Transverse colon (tissue), 4 donors: ENCODE measurements at regions of chr16 and their contacts with region 1.

Region 1: DNA sequence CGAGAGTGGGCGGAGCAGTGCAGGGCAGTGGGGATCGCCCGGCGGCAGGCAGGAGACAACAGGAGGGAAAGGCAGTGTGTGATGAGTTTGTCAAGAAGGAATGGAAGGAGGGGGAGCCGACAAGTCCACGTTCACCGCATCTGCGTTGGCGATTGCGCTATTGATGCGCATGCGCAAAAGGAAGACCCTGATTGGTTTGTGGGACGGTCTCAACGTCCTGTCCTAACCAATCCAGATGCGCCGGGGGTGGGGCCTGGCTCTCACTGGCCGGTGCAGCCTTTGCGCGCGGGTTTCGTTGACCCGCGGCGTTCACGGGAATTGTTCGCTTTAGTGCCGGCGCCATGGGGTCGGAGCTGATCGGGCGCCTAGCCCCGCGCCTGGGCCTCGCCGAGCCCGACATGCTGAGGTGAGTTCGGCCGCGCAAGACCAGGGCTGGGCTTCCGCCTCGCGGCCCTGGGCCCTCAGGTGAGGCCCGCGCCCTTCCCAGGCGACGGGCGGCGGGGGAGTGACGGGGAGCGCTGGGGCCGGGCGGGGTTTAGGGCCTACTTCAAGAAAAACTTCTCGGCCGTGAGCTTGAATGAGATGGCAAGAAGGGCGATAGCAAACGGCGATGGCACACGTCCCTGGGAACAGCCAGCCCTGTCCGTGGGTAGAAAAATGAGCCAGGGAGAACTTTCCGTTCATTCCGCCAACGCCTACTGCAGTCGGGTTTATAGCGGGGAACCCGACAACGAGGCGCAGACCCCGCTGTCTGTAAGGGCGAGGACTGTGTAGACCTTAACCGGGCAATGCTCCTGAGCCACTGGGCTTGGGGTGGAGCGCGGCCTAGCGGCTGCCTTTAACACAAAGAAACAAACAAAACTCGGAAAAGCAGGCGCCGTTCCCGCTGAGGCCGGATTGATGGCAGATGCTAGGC is at the start of gene ORC6:
- DNase-seq: peak; percentile 98
- H3K4me3 ChIP-seq: peak within 1 kb of the TSS; percentile 61 to 93 (median 86)
- H3K27ac ChIP-seq: peak within 1 kb of the TSS; percentile 88 to 96 (median 92)
- H3K4me1 ChIP-seq: peaks cover 10 to 53% (median 32%) of the 10 kb centered on the region in 4 donors
- H3K27me3 ChIP-seq: no peaks in the 10 kb centered on the region
- CTCF ChIP-seq: peak in 3 of 5 experiments; percentile 11 to 29 (median 23)
- EP300 ChIP-seq: no peak
- POLR2A ChIP-seq: no peak
- total RNA-seq, gene ORC6: 0.60 to 4.9 (median 2.7) TPM in 3 of 4 donors, not detected in the other

Region 2: DNA sequence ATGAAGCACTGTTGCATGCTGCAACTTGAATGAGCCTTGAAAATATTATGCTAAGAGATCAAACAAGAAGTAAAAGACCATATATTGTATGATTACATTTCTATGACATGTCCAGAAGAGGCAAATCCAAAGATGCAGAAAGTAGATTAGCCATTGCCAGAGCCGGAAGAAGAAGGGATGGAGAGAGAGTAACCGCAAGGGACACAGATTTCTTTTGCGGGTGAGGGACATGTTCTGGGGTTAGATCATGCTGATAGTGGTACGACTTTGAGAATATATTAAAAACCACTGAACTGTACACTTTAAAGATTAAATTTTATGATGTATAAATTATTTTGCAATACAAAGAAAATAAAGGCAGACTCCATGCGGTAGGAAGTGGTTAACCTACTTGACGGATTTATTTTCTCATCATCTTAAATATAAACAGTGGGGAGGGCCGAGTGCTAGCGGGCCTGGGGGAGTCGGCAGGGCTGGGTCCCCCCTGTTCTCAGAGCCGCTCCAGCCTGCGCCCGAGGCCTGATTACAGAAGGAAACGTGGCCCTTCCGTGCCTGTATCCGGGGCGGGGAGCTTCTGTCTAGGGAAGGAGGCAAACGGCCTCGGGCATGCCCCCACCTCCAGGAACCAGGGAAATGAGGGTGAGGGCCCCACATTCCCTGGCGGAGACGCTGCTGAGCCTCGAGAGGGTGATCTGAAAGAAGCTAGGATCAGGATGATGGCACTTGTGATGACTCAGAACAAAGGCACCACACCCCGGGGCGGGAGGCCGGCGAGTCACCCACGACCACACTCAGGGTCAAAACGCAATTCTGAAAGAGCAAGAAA is 116.4 kb before region 1 on chr16:
- in situ Hi-C with region 1: no loop called
- intact Hi-C with region 1: no loop called
- DNase-seq: no peak
- H3K4me3 ChIP-seq: no peak overlapping the region
- H3K27ac ChIP-seq: no peak overlapping the region
- H3K4me1 ChIP-seq: no peaks in the 10 kb centered on the region
- H3K27me3 ChIP-seq: no peaks in the 10 kb centered on the region
- CTCF ChIP-seq: no peak
- EP300 ChIP-seq: no peak
- POLR2A ChIP-seq: no peak

Region 3: GRCh38 chr16:46801428-46802049 is 111.9 kb after region 1 on chr16:
- in situ Hi-C with region 1: no loop called
- intact Hi-C with region 1: no loop called
- DNase-seq: no peak
- H3K4me3 ChIP-seq: no peak overlapping the region
- H3K27ac ChIP-seq: no peak overlapping the region
- H3K4me1 ChIP-seq: no peaks in the 10 kb centered on the region
- H3K27me3 ChIP-seq: no peaks in the 10 kb centered on the region
- CTCF ChIP-seq: peak; percentile 24 to 36 (median 30)
- EP300 ChIP-seq: no peak
- POLR2A ChIP-seq: no peak

Region 4: GRCh38 chr16:46822270-46822669 is 132.6 kb after region 1 on chr16:
- in situ Hi-C with region 1: no loop called
- intact Hi-C with region 1: loop called (anchors 10 kb)
- DNase-seq: no peak
- H3K4me3 ChIP-seq: no peak overlapping the region
- H3K27ac ChIP-seq: no peak overlapping the region
- H3K4me1 ChIP-seq: peaks cover 0 to 9% (median 0%) of the 10 kb centered on the region in 4 donors
- H3K27me3 ChIP-seq: no peaks in the 10 kb centered on the region
- CTCF ChIP-seq: no peak
- EP300 ChIP-seq: no peak
- POLR2A ChIP-seq: no peak

Region 5: DNA sequence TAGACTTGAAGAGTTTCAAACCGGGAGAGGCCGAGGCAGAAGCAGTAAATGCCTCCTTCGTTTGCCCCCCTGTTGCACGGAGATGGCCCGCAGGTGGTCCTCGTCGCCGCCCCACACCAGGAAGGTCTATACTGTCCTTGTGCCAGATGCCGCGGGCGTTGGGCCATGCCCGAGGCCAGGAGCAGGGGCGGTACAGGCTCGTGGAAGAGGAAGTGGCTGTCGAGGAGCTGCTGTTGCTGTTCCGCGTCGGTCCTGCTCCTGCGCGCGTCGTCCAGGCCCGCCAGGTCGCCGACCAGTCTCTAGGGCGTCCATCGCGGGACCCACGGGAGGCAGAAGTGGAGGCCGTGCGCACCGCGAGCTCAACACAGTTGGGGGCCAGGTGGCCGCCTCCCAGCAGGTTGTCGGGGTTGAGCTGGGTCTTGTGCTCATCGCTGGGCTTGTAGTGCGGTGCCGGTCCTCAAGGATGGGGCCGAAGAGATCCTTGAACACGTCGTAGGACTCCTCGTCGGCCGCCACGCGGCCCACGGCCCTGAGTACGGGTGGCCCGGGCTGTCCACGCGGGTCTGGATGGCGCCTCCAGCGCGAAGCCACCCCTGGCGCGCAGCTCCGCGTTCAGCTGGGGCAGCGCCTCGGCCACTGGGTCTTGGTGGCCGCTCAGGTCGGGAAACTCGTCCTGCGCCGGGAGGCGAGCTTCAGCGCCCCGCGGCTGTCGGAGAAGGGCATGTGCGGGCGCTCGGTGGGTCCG is 154.4 kb after region 1 on chr16:
- in situ Hi-C with region 1: no loop called
- intact Hi-C with region 1: no loop called
- DNase-seq: no peak
- H3K4me3 ChIP-seq: no peak overlapping the region
- H3K27ac ChIP-seq: no peak overlapping the region
- H3K4me1 ChIP-seq: peaks cover 0 to 2% (median 0%) of the 10 kb centered on the region in 4 donors
- H3K27me3 ChIP-seq: peaks cover 6% of the 10 kb centered on the region
- CTCF ChIP-seq: no peak
- EP300 ChIP-seq: no peak
- POLR2A ChIP-seq: no peak

Region 6: DNA sequence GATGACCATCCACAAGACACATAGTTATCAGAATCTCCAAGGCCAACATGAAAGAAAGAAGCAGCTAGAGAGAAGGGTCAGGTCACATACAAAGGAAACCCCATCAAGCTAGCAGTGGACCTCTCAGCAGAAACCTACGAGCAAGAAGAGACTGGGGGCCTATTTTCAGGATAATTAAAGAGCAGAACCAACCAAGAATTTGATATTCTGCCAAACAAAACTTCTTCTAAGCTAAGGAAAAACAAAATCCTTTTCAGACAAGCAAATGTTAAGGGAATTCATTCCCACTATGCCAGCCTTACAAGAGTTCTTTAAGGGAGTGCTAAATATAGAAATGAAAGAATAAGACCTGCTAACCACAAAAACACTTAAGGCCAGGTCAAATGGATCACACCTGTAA is 723.4 kb after region 1 on chr16:
- in situ Hi-C with region 1: no loop called
- intact Hi-C with region 1: no loop called
- DNase-seq: no peak
- H3K4me3 ChIP-seq: no peak overlapping the region
- H3K27ac ChIP-seq: no peak overlapping the region
- H3K4me1 ChIP-seq: no peaks in the 10 kb centered on the region
- H3K27me3 ChIP-seq: no peaks in the 10 kb centered on the region
- CTCF ChIP-seq: no peak
- EP300 ChIP-seq: no peak
- POLR2A ChIP-seq: no peak